ENCODE measurements at regions of chr17 and their contacts with region 1.

Region 1: GRCh38 chr17:1516388-1517161 is at the start of gene INPP5K:
- DNase-seq: peak; percentile 98
- H3K4me3 ChIP-seq: peak within 1 kb of the TSS; percentile 95 to 98 (median 96)
- H3K27ac ChIP-seq: peak within 1 kb of the TSS; percentile 71
- H3K4me1 ChIP-seq: peaks cover 27% of the 10 kb centered on the region
- H3K27me3 ChIP-seq: no peaks in the 10 kb centered on the region
- CTCF ChIP-seq: peak in 1 of 2 donors; percentile 17
- total RNA-seq, gene INPP5K: 18.9 to 30.5 TPM

Region 2: GRCh38 chr17:1122533-1123392 is 393.8 kb before region 1 on chr17:
- CTCF ChIA-PET with region 1: no interaction called
- dilution Hi-C with region 1: no loop called
- in situ Hi-C with region 1: no loop called
- intact Hi-C with region 1: loop called (anchors 10 kb)
- DNase-seq: peak; percentile 68
- H3K4me3 ChIP-seq: no peak overlapping the region
- H3K27ac ChIP-seq: no peak overlapping the region
- H3K4me1 ChIP-seq: peaks cover 20% of the 10 kb centered on the region
- H3K27me3 ChIP-seq: no peaks in the 10 kb centered on the region
- CTCF ChIP-seq: peak; percentile 77 to 86

Region 3: GRCh38 chr17:1164935-1165556 is 351.5 kb before region 1 on chr17:
- CTCF ChIA-PET with region 1: no interaction called
- dilution Hi-C with region 1: no loop called
- in situ Hi-C with region 1: no loop called
- intact Hi-C with region 1: no loop called
- DNase-seq: no peak
- H3K4me3 ChIP-seq: no peak overlapping the region
- H3K27ac ChIP-seq: no peak overlapping the region
- H3K4me1 ChIP-seq: no peaks in the 10 kb centered on the region
- H3K27me3 ChIP-seq: no peaks in the 10 kb centered on the region
- CTCF ChIP-seq: no peak

Region 4: GRCh38 chr17:1267471-1267947 is 249.1 kb before region 1 on chr17:
- CTCF ChIA-PET with region 1: no interaction called
- dilution Hi-C with region 1: no loop called
- in situ Hi-C with region 1: loop called in 1 of 2 experiments (anchors 25 kb)
- intact Hi-C with region 1: no loop called
- DNase-seq: no peak
- H3K4me3 ChIP-seq: peak overlapping the region; percentile 57 to 75 (median 67)
- H3K27ac ChIP-seq: no peak overlapping the region
- H3K4me1 ChIP-seq: no peaks in the 10 kb centered on the region
- H3K27me3 ChIP-seq: peaks cover 19% of the 10 kb centered on the region
- CTCF ChIP-seq: no peak

Region 5: DNA sequence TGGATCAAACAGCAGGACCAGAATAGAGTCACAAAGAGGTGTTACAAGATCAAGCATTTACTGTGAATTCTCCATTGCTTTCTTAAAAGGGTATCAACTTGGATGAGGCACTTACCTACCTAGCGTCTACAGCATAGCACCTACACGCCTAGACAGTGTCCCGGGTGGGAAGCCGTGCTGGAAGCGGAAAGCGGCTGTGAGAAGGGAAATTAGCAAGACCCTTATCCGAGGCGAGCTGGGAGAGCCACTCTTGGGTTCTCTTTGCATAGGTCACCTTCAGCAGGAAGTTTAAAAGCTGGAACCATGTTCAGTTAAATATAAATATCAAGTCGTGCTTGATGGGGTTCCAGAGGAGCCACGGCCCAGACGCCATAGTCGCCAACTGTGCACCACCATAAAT is 190.8 kb before region 1 on chr17:
- CTCF ChIA-PET with region 1: no interaction called
- dilution Hi-C with region 1: no loop called
- in situ Hi-C with region 1: no loop called
- intact Hi-C with region 1: no loop called
- DNase-seq: no peak
- H3K4me3 ChIP-seq: no peak overlapping the region
- H3K27ac ChIP-seq: no peak overlapping the region
- H3K4me1 ChIP-seq: no peaks in the 10 kb centered on the region
- H3K27me3 ChIP-seq: no peaks in the 10 kb centered on the region
- CTCF ChIP-seq: no peak

Region 6: DNA sequence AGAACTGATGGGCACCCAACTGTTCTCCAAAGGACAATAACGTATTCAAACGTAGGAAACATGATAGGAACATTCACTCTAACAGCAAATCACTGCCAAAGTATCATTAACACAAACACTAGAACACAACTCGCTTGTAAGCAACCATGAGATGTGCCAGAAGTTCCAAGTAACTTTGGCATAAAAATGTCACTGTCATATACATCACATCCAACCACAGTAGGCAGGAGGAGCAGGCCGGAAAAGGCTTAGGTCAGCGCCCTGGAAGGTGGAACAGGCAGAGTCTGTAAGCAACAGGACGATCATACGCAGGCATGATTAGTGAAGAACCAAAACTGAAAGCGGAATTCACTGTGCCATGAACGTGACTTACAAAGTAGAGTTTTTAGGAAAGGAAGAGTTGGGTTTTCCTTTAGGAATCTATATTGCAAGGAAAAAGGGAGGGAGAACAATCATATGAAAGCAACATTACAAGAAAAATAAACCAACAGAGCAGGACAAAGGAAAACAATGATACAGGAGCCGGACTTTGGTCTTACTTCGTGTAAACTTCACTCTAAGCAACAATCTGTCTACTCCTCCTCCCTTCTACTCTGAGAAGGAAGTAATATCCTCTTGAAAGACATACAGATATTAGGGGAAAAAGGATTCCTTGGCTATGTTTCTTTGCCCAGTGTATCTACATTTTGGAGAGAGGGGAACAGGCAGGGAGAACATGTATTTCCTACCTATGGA is 168.8 kb before region 1 on chr17:
- CTCF ChIA-PET with region 1: no interaction called
- dilution Hi-C with region 1: no loop called
- in situ Hi-C with region 1: no loop called
- intact Hi-C with region 1: loop called (anchors 5 kb)
- DNase-seq: peak; percentile 44
- H3K4me3 ChIP-seq: no peak overlapping the region
- H3K27ac ChIP-seq: no peak overlapping the region
- H3K4me1 ChIP-seq: no peaks in the 10 kb centered on the region
- H3K27me3 ChIP-seq: no peaks in the 10 kb centered on the region
- CTCF ChIP-seq: no peak

Region 7: DNA sequence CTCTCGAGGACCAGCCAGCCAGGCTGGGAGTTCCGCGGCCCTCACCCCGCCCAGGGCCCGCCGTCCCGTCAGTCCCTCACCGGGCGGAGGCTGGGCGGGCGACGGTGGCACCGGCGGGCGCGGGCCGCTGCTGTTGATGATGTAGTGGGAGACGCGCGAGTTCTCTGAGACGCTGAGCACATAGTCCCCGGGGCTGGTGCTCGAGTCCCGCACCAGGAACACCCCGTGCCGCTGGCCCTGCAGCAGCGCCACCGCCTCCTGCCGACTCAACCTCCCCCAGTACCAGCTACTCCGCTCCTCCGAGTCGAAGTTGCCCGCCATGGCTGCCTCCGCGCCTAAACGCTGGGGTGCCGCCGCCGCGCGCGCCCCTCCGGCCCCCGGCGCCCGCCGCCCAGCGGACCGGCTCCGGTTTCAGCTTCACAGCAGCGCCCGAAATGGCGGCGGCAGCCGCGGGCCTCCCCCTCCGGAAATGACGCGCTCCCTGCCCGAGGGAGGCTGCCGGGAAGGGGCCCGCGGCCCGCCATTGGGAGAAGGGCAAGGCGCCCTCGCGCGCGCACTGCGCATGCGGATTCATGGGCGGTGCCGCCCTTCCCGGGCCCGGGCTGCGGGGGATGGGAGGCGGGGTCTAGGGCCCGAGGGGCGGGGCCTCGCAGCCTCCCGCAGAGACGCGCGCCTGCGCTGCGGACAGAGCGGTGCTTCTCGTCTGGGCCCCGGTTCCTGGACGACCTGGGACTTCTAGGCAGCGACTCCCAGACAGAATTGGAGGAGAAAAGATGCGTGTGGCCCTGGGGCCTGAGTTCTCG is 60.6 kb before region 1 on chr17 and contains the start of gene CRK:
- CTCF ChIA-PET with region 1: no interaction called
- dilution Hi-C with region 1: no loop called
- in situ Hi-C with region 1: no loop called
- intact Hi-C with region 1: loop called (anchors 1 kb)
- DNase-seq: peak; percentile 94
- H3K4me3 ChIP-seq: peak within 1 kb of the TSS; percentile 76 to 97 (median 91)
- H3K27ac ChIP-seq: peak within 1 kb of the TSS; percentile 81
- H3K4me1 ChIP-seq: peaks cover 13% of the 10 kb centered on the region
- H3K27me3 ChIP-seq: no peaks in the 10 kb centered on the region
- CTCF ChIP-seq: no peak
- total RNA-seq, gene CRK: 71.4 to 127 TPM

Region 8: GRCh38 chr17:1490643-1491442 is 25.7 kb before region 1 on chr17:
- CTCF ChIA-PET with region 1: no interaction called
- dilution Hi-C with region 1: no loop called
- in situ Hi-C with region 1: no loop called
- intact Hi-C with region 1: loop called (anchors 1 kb)
- DNase-seq: peak; percentile 42
- H3K4me3 ChIP-seq: peak overlapping the region; percentile 64 to 83 (median 71)
- H3K27ac ChIP-seq: peak overlapping the region; percentile 27
- H3K4me1 ChIP-seq: peaks cover 42% of the 10 kb centered on the region
- H3K27me3 ChIP-seq: no peaks in the 10 kb centered on the region
- CTCF ChIP-seq: no peak

Measured in mammary epithelial cell (primary cell).